Posterior cingulate gyrus (tissue), 11 donors: ENCODE measurements at regions of chr9 and their contacts with region 1.

Region 1: GRCh38 chr9:123401879-123402513 is 46.0 kb downstream of the CRB2 start:
- DNase-seq: peak in 6 of 10 donors; percentile 41 to 64 (median 56)

Region 2: DNA sequence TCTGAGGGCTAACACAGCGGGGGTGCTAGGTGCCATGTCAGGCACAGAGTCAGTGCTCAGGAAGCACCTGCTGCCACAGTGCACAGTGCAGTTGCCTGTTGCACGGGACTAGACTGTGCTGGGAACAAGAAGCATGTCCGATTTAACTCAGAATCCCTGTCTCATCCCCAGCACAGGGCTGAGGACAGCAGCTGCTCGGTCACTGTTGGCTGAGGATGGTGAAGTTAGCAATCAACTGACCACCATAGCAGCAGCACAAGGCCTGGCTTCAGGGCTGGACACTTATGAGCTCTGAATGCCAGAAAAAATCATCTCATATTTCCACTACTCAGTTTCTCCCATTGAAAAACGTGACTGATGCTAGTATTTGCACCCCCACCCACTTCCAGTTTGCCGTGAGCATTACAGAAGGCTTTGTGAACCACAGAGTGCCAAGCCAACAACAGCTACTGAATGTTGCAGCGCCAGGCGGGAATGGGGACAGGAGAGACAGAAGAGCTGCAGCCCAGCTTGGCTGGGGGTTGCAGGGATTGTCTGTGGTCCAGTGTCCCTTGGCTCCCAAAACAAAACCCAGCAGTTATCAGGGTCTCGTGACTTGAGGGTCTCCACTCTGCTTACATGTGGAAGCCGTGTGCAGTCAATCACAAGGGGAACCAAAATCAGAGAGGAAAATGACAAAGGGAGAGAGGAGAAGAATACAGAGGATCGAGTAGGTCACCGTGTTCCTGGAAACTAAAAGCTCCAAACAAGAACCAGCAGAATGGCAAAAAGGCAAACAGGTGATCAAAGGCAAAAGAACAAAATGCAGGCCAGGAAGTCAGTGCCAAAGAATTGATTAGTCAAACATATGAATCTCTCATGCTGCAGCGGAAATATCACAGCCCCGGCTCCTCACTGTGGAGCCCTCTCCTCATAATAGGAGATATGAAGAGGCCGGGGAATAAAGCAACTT is 109.6 kb after region 1 on chr9:
- intact Hi-C with region 1: loop called (anchors 10 kb)
- DNase-seq: peak in 5 of 10 donors; percentile 11 to 83 (median 21)

Region 3: DNA sequence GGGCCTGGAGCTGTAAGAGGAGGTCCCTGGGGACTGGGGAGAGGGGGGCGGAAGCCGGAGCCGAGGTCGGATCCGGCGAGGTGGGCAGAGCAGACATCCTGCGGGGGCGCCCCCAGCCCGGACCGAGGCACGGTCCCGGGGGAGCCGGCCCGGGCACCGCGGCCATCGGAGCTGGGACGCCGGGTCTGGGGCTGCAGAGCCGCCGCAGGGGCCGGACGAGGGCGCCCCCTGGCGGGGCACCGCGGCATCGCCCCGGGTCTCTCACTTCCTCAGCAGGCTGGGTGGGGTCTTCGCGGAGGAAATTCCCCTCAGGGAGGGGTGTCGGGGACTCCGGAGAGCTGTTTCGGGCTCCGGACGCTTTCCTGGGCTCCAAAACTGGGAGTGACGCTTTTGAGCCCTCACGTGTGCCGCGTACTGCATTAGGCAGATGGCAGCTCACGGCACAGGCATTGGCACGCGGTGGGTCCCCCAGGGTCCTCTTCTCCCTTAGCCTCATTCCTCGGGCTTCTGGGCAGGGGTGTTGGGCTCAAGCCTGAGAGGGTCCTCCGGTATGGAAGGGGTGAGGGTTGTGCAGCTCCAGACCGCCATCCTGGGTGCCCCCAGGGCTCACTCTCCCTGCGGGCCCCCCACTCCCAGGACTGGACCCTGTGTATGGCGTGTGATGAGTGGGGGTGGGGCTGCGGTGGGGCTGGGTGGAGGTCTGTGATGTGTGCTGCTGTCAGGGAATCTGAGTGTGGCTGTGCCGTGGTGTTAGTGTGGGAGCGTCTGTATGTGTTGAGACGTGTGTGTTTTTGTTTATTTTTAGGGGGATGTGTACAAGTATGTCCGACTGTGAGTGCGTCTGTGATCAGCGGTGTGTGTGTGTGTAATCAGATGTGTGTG is 639.2 kb after region 1 on chr9:
- intact Hi-C with region 1: loop called (anchors 2 kb)
- DNase-seq: peak in 7 of 10 donors; percentile 39 to 93 (median 62)